Activated CD4-positive, alpha-beta memory T cell treated with anti-CD3 and anti-CD28 coated beads, Interleukin-2, amount 10 ng/mL, durations not matched to agents 7 days and 5 days (primary cell): ENCODE measurements at regions of chr3 and their contacts with region 1.

Region 1: GRCh38 chr3:49120438-49121131 is at the start of gene USP19:
- DNase-seq: peak; percentile 95
- H3K4me3 Mint-ChIP-seq: peak within 1 kb of the TSS; percentile 83
- H3K27ac Mint-ChIP-seq: peak within 1 kb of the TSS; percentile 90
- H3K4me1 Mint-ChIP-seq: peaks cover 24% of the 10 kb centered on the region
- H3K27me3 Mint-ChIP-seq: no peaks in the 10 kb centered on the region
- total RNA-seq, gene USP19: 61.2 to 61.5 TPM

Region 2: DNA sequence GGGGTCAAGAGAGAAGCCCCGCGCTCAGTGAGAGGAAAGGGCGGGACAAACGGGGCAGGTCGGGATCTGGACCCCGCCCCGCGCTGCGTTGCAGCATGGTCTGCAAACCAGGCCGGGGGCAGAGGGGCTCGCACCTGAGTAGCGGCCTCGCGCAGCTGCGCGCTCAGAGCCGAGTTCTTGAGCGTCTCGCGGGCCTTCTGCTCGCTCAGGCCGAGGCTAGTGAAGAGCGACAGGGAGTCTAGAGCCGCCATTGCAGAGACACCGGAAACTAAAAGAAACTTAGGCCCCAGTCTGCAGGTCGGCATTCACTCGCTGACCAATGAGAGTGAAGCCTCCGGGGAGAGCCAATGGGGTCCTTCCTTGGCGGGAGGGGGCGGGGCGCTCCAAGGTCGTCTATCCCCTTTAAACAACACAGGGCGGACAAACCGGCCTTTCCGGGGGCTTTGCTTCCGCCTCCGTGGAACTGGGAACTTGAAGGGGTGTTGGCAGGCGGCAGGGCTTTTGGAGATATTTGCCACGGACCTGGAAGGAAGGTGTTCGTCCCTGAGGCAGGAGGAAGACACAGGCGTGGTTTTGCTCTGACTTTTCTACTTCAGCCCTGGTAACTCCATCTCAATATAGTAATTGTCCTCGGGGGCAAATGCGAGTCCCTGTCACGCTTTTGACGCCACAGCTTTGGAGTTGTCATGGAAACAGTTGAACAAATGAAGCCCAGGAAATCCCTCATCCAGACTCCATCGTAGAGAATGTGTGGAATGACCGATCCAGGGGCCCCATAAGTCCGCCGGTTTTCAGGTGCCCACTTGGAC is 15.9 kb before region 1 on chr3 and contains the start of gene QARS1:
- CTCF ChIA-PET with region 1: no interaction called
- POLR2A ChIA-PET with region 1: interaction called, 27 read pairs
- DNase-seq: peak; percentile 92
- H3K4me3 Mint-ChIP-seq: peak within 1 kb of the TSS; percentile 95
- H3K27ac Mint-ChIP-seq: peak within 1 kb of the TSS; percentile 90
- H3K4me1 Mint-ChIP-seq: peaks cover 29% of the 10 kb centered on the region
- H3K27me3 Mint-ChIP-seq: no peaks in the 10 kb centered on the region
- total RNA-seq, gene QARS1: 194 to 212 TPM